ENCODE measurements at regions of chr17 and their contacts with region 1.

Region 1: GRCh38 chr17:39980351-39981206 is at the start of gene PSMD3:
- DNase-seq: peak; percentile 99
- H3K4me3 ChIP-seq: peak within 1 kb of the TSS; percentile 99
- H3K27ac ChIP-seq: peak within 1 kb of the TSS; percentile 76
- H3K27me3 ChIP-seq: no peaks in the 10 kb centered on the region
- CTCF ChIP-seq: peak; percentile 84
- polyA plus RNA-seq, gene PSMD3: 62.6 and 81.6 TPM in 2 replicates

Region 2: DNA sequence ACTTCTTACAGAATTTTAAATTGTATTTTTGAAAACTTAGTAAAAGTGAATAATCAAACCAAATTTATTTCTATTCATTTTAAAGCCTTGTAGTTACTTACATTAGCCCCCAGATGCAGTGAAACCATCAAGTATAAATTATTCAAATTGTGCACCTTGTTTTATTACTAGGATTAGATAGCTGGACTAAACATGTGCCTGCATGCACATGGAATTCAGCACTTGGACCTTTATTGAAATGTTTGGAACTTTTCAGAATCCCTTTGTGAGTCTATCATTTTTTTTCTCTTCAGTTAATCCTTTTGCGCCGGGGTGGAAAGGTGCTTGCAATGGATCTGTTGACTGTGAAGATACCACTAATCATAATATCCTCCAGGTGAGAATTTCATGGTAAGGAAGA is 107.8 kb before region 1 on chr17:
- CTCF ChIA-PET with region 1: interaction called, 64 read pairs
- POLR2A ChIA-PET with region 1: interaction called, 16 read pairs
- DNase-seq: peak; percentile 11
- H3K4me3 ChIP-seq: no peak overlapping the region
- H3K27ac ChIP-seq: no peak overlapping the region
- H3K27me3 ChIP-seq: peaks cover 21% of the 10 kb centered on the region
- CTCF ChIP-seq: peak; percentile 57

Region 3: DNA sequence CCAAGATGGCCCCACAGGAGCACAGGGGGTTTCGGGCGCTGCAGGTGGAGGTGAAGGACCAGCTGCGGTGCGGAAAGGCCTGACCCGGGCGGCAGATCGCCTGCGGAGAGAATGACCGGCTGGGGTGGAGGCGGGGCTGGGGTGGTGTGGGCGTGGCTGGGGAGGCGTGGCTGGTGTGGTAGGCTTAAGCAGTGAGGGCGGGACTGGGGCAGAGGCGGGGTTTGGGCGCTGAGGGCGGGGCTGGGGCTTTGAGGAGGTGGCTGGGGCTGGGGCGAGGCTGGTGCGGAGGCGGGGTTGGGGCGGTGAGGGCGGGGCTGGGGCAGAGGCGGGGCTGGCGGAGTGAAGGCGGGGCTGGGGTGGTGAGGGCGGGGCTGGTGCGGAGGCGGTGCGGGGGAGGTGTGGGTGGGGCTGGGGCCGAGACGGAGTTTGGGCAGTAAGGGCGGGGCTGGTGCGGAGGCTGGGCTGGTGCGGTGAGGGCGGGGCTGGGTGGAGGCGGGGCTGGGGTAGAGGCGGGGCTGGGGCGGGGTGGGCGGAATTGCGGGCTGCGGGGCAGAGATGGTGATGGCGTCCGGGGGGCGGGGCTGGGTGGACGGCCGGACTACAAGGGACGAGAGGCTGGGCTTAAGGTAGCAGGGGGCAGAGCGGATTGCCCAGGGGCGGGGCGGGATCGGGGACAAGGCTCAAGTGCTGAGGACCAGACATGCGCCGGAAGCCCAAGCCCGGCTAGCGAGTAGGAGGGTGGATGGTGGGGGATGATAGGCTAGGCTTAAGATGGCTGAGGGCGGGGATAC is 27.7 kb before region 1 on chr17:
- CTCF ChIA-PET with region 1: interaction called, 64 read pairs
- POLR2A ChIA-PET with region 1: interaction called, 13 read pairs
- DNase-seq: peak; percentile 82
- H3K4me3 ChIP-seq: peak overlapping the region; percentile 57
- H3K27ac ChIP-seq: peak overlapping the region; percentile 2
- H3K27me3 ChIP-seq: peaks cover 10% of the 10 kb centered on the region
- CTCF ChIP-seq: no peak

Region 4: GRCh38 chr17:39960524-39961041 is 20.0 kb before region 1 on chr17:
- CTCF ChIA-PET with region 1: interaction called, 64 read pairs
- POLR2A ChIA-PET with region 1: interaction called, 13 read pairs
- DNase-seq: no peak
- H3K4me3 ChIP-seq: no peak overlapping the region
- H3K27ac ChIP-seq: no peak overlapping the region
- H3K27me3 ChIP-seq: peaks cover 3% of the 10 kb centered on the region
- CTCF ChIP-seq: no peak

Region 5: DNA sequence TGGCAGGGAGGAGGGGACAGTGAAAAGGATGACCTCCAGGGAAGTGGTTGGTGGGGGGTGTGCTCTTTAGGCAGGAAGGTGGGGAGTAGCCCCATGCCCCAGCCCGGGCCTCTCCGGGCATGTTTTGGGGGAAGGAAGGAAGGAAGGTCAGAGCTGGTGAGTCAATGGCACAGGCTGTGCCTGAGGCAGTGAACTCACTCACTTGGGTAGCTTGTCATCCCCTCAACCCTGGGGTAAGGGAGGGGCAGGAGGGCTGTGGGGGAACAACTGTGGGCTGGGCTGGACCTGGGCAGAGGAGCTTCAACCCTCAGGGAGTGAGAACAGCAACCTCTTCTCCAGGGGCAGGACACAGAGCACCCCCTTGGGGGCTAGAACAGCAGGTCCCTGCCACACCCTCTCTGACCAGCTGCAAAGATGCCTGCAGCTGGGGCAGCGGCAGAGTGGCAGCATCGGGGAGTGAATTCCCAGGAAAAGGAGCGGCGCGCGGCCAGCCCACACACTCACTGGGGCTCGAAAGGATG is 40.9 kb after region 1 on chr17:
- CTCF ChIA-PET with region 1: interaction called, 3 read pairs
- POLR2A ChIA-PET with region 1: interaction called, 11 read pairs
- DNase-seq: no peak
- H3K4me3 ChIP-seq: no peak overlapping the region
- H3K27ac ChIP-seq: peak overlapping the region; percentile 75
- H3K27me3 ChIP-seq: no peaks in the 10 kb centered on the region
- CTCF ChIP-seq: no peak